Posterior vena cava (tissue), 2 donors: ENCODE measurements at regions of chr1 and their contacts with region 1.

Region 1: DNA sequence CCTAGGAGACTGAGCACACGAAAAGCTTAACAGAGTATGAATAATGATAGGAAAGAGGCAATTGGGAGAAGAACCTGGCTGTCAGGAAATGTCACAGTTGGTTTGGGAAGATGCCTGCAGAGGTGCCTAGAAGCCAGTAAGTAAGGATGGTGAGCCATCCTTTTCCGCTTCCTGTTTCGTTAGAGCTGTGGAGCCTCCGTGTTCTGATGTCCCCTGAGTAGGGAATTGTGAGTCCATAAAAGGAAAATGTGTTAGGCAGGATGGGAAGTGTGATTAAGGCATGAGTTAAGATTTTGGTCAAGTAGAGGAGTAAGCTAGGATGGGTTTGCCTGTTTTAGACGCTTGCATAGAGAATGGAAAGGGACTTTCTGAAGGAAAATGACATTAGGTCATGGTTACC is 9.0 kb downstream of the CLIC4 start:
- DNase-seq: no peak

Region 2: GRCh38 chr1:23691499-23692307 is 1062.5 kb before region 1 on chr1 and contains the start of gene RPL11:
- intact Hi-C with region 1: loop called in 1 of 2 experiments (anchors 5 kb)
- DNase-seq: peak; percentile 97
- total RNA-seq, gene RPL11: 706 to 724 TPM

Region 3: DNA sequence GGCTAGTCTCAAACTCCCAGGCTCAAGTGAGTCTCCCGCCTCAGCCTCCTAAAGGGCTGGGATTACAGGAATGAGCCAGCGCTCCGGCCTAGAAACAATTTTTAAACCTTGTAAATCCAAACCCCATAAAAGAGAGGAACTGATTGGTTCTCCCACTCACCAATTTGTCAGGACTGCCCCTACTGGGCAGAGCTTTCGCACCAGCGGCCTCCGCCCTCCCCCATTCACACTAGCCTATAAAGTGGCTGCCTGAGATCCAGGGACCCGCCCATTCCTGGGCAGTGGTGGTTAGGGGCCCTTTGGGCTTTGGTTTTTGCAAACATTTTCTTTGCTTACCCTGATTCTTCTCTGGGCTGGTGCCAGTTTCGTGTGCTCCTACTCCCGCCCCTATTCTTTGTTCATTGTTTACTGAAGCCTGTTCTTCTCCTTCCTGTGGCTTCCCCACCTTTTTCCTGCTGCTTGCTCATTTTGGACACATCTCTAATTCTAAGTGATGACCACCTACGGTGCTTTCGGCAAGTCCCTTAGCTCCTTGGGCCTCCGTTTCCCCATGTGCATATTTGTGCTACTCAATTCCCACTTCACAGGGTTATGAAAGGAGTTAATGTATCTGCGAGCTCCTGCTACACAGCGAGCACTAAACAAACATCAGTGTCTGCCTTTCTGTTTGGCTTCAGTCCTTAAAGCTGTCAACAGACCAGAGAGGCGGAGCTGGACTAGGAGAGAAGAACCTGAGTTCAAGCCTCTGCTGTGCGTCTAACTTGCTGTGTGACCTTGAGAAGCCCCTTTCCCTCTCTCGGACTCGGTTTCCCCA is 48.8 kb before region 1 on chr1:
- intact Hi-C with region 1: no loop called
- DNase-seq: peak; percentile 89

Region 4: DNA sequence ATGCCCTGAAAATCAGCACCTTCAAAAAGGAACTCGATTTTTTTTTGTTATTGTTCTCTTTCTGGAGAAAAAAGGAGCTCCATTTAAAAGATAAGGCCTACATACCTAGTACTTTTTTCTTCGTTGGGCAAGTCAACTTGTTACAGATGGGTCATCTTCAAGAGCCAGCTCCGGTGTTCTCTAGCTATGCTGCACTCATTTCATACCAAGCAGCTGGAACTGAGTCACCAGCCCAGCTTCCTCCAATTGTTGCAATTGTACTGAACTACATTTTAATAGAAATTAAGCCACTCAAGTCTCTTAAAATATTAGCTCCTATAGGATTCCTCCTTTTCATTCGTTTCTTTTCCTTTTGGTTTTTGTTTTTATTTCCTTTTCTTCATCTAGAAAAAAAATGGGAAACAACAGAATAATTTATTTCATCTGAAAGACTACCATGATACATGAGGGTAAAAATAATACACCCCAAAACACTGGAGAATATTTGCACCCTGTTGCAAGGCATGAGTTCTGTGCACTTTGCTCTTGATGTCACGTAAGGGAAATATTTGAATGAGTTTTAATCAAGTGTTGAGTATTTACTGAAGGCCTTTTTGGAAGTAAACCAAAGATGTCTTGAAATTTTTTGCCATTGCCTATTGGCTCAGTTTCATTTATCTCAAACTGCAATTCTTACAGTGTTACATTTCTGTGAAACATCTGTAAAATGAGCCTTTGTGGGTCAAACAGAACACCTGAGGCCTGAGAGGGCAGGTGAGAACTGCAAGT is 51.5 kb after region 1 on chr1:
- intact Hi-C with region 1: loop called in 1 of 2 experiments (anchors 10 kb)
- DNase-seq: no peak

Region 5: GRCh38 chr1:26072305-26072704 is 1318.1 kb after region 1 on chr1:
- intact Hi-C with region 1: loop called in 1 of 2 experiments (anchors 10 kb)
- DNase-seq: no peak